Endothelial cell of umbilical vein (primary cell): ENCODE measurements at regions of chr9 and their contacts with region 1.

Region 1: DNA sequence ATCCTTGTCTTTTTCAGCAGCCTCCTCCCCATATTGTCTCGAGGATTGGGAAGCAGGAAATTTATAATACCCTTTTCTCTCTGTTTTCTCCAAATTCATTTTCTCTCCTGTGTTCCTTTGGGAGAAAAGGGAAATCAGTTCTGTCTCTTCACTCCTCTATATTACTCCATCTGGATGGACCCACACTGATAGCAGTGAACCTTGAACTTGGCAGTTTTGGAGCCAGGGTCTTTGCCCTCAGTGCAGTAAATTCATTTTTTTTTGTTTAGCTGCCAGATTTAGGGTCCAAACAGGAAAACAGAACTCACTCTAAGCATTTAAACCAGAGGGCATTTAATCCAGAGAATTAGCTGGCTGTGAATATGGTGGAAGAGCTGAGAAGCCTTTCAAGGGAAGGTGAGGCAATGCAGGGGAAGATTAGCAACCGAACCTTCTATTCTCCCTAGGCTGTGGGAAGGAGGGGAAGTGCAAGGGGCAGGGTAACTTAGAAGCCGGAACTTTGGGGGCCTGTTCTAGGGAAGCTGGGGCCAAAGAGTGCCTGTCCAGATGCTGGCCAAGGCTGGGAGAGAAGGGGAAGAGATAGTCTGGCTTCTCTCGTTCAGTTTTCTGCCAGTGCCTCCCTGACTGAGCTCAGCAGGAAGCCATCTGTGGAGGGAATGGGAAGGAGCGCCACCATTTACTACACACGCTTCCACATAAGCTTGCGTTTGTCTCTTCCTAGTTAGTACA is 16.3 kb upstream of the NPR2 start:
- DNase-seq: peak; percentile 79
- H3K4me3 ChIP-seq: peak overlapping the region in 1 of 3 experiments; percentile 13
- H3K27ac ChIP-seq: peak overlapping the region; percentile 52
- H3K4me1 ChIP-seq: peaks cover 36% of the 10 kb centered on the region
- H3K27me3 ChIP-seq: no peaks in the 10 kb centered on the region
- CTCF ChIP-seq: no peak
- POLR2A ChIP-seq: no peak

Region 2: DNA sequence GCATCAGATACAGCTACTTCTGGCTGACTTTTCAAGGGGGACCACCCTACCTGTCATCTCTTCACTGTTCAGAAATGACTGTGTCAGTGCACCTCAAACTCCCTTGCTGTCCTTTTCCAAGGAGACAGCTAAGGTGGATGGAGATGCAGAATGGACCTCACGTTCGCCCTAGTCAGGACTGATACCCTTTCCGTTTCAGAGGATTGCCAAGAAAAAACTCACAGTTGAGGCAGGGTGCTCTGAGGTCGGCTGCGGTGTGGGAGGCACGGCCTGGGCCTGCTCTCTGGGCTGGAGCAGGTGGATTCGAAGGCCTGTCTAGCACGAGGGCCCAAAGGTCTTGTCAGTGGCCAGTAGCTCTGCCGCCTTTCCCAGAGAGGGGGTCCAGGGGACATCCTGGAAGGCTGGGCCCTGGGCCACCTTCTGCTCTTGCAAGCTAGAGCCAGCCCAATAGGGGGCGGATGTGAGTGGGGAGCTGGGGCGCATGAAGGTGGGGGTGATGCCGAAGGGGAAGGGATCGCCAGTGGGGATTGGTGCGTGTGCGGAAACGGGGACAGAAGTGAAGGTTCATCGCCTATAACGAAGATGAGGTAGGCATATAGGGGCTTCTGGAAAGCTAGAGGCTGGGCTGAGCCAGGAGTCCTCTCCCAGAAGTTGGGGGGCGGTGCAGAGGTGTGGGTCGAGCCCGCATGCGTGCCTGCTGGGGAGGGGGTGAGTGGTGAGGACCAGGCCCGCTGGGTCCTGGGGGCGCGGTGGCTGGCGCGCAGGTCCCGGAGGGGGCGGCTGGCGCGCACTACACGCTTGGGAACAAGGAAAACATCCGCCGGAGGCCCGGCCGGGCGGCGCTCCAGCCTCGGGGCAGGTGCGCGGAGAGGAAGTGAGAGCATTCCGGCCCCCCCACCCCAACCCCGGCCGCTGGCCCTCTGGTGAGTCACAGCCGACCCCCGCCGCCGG is 18.5 kb before region 1 on chr9:
- CTCF ChIA-PET with region 1: interaction called, 24 read pairs
- POLR2A ChIA-PET with region 1: interaction called, 8 read pairs
- dilution Hi-C with region 1: no loop called
- intact Hi-C with region 1: loop called (anchors 1 kb)
- DNase-seq: peak; percentile 84
- H3K4me3 ChIP-seq: peak overlapping the region in 2 of 3 experiments; percentile 8 to 15
- H3K27ac ChIP-seq: peak overlapping the region; percentile 97
- H3K4me1 ChIP-seq: peaks cover 92% of the 10 kb centered on the region
- H3K27me3 ChIP-seq: no peaks in the 10 kb centered on the region
- CTCF ChIP-seq: peak; percentile 45 to 68
- POLR2A ChIP-seq: no peak

Region 3: GRCh38 chr9:35763181-35763580 is 11.9 kb before region 1 on chr9:
- CTCF ChIA-PET with region 1: interaction called, 14 read pairs
- POLR2A ChIA-PET with region 1: interaction called, 8 read pairs
- dilution Hi-C with region 1: no loop called
- intact Hi-C with region 1: loop called (anchors 1 kb)
- DNase-seq: no peak
- H3K4me3 ChIP-seq: no peak overlapping the region
- H3K27ac ChIP-seq: no peak overlapping the region
- H3K4me1 ChIP-seq: peaks cover 41% of the 10 kb centered on the region
- H3K27me3 ChIP-seq: no peaks in the 10 kb centered on the region
- CTCF ChIP-seq: no peak
- POLR2A ChIP-seq: no peak